ENCODE measurements at regions of chr11 and their contacts with region 1.

Region 1: GRCh38 chr11:36131721-36132397 is 157.4 kb downstream of the COMMD9 start:
- DNase-seq: peak; percentile 14
- H3K4me3 ChIP-seq: no peak overlapping the region
- H3K27ac ChIP-seq: no peak overlapping the region
- H3K4me1 ChIP-seq: no peaks in the 10 kb centered on the region
- H3K27me3 ChIP-seq: no peaks in the 10 kb centered on the region
- CTCF ChIP-seq: peak; percentile 16 to 43 (median 41)
- EP300 ChIP-seq: no peak
- POLR2A ChIP-seq: no peak

Region 2: DNA sequence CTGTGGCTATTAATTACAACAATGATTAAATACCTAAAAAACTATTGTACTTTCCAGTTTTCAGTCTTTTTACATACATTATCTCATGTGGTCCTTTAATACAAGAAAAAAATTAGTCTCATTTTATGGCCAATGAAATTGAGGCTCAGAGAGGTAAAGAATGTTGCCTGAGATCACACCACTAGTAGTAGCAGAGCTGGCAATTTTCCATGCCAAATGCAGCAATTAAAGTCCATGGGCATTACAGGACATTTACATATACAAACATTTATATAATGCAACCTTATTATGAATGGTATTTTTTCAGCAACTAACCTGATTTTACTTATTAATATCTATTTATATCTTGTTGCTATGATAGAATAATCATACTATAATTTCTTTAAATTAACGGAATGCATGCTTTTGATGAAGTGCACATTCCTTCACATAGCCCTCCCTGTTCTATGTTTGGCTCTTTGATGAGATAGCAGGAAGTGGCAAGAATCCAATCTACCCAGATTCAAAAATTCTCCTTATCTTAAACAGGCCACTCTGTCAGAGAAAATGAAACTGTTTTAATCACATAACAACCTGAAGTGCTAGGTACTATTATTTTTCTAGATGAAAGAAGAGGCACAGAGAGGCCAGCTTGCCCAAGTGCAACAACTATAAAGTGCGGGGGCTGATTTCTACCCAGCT is 308.9 kb before region 1 on chr11:
- in situ Hi-C with region 1: no loop called
- intact Hi-C with region 1: loop called (anchors 10 kb)
- DNase-seq: no peak
- H3K4me3 ChIP-seq: no peak overlapping the region
- H3K27ac ChIP-seq: no peak overlapping the region
- H3K4me1 ChIP-seq: peaks cover 0 to 8% (median 0%) of the 10 kb centered on the region in 4 donors
- H3K27me3 ChIP-seq: no peaks in the 10 kb centered on the region
- CTCF ChIP-seq: no peak
- EP300 ChIP-seq: no peak
- POLR2A ChIP-seq: no peak

Measured in transverse colon (tissue), 4 donors.